WTC11 (cell line): ENCODE measurements at regions of chr7 and their contacts with region 1.

Region 1: GRCh38 chr7:36440880-36441279 is 51.2 kb downstream of the ANLN start:
- DNase-seq: no peak
- ATAC-seq: peak; percentile 32
- H3K4me3 Mint-ChIP-seq: no peak overlapping the region
- H3K27ac Mint-ChIP-seq: no peak overlapping the region
- H3K4me1 Mint-ChIP-seq: no peaks in the 10 kb centered on the region
- H3K27me3 Mint-ChIP-seq: no peaks in the 10 kb centered on the region
- CTCF ChIP-seq: no peak

Region 2: DNA sequence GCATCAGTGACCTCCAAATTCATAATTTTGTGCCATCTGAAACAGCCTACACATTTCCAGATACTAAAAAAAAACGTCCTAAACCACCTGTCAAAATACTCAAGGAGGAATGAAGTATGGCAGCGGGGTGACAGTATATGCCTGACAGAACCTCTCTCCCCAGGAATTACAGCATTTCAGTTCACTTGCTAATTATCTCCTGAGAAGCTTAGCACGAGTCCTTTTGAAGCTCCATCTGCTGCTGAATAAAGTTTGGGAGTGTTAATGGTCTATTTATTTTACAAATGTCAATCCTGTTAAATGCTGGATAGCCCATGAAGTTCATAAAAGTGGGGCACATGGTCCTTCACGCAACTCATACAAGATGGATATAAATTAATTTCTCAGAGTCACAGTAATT is 80.6 kb before region 1 on chr7:
- CTCF ChIA-PET with region 1: no interaction called
- POLR2A ChIA-PET with region 1: no interaction called
- DNase-seq: no peak
- ATAC-seq: peak; percentile 84
- H3K4me3 Mint-ChIP-seq: no peak overlapping the region
- H3K27ac Mint-ChIP-seq: no peak overlapping the region
- H3K4me1 Mint-ChIP-seq: peaks cover 28% of the 10 kb centered on the region
- H3K27me3 Mint-ChIP-seq: peaks cover 98% of the 10 kb centered on the region
- CTCF ChIP-seq: no peak

Region 3: DNA sequence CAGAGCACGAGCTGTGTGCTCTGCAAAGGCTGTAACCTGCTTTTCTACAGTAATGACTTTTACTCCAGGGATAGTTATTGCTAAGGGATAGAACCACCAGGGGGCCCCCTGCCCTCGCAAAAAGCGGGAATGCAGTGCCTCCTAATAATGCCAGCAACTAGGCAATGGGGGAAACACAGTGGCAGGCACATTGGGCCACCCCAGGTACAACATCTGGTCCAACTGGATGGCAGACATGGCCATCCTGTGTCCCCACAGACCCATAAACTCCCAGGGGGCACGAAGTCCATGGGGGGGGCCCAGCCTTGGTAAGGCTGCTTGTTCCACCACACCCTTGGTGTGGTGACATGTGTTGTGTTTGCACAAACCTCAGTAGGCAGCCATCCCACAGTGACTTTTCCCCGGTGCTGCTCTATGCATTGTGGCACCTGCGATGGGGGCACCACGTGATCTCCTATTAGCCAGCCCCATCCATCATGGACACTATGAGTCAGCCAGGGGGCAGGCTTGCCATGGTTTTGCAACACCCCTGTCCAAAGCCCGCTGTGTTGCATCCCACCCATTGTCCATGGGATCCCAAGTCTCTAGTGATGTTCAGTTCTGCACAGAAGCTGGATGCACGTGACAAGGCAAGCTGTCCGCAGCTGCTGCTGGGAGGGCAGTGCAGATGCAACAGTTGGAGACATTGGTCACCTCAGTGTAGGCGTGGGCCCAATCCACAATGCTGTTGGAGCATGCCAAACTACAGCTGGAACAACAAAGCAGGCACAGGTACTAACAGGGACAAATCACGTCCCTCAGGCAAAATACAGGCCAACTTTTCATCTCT is 32.8 kb after region 1 on chr7:
- CTCF ChIA-PET with region 1: interaction called, 17 read pairs
- POLR2A ChIA-PET with region 1: no interaction called
- DNase-seq: peak; percentile 79
- ATAC-seq: peak; percentile 89
- H3K4me3 Mint-ChIP-seq: no peak overlapping the region
- H3K27ac Mint-ChIP-seq: no peak overlapping the region
- H3K4me1 Mint-ChIP-seq: no peaks in the 10 kb centered on the region
- H3K27me3 Mint-ChIP-seq: no peaks in the 10 kb centered on the region
- CTCF ChIP-seq: peak; percentile 59

Region 4: DNA sequence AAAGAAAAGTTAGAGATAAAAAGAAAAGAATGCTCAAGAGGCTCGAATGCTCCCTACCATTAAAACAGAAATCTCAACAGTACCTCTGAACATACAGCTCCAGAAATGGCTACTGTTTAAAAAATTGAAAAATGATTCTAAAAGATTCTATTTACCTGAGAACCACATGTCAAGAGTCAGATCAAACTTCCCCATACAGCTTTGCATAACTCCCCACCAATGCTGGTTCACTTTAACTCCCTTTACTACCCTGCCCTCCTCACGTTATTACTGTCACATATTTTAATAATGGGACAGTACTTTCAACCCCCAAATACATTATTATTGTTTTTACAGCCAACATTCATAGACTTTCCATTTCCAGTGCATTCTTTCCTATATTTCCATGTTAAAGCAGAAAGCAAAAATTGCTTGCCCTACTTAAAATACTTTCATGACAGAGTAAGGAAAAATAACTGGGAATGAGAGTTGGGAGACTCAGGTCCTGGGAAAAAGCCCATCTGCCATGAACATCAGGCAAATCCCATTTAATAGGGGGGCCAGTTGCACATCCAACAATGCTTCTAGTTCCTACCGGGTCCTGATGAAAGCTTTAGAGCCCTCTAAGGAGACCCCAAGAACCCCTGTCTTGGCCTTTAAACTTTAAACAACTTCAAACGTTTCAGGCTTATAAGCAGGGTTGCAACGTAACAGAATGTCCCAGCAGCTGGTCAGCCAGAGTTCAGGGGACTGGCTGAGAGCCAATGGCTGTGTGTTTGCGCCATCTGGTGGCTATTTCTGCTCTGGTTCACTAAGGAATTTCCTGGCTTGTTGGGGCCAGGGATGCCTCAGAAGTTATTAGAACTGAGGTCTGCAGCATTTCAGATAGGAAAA is 760.4 kb after region 1 on chr7:
- CTCF ChIA-PET with region 1: interaction called, 15 read pairs
- POLR2A ChIA-PET with region 1: no interaction called
- DNase-seq: peak; percentile 85
- ATAC-seq: peak; percentile 93
- H3K4me3 Mint-ChIP-seq: no peak overlapping the region
- H3K27ac Mint-ChIP-seq: no peak overlapping the region
- H3K4me1 Mint-ChIP-seq: peaks cover 14% of the 10 kb centered on the region
- H3K27me3 Mint-ChIP-seq: no peaks in the 10 kb centered on the region
- CTCF ChIP-seq: peak; percentile 33